Gastrocnemius medialis (tissue), 4 donors: ENCODE measurements at regions of chr9 and their contacts with region 1.

Region 1: DNA sequence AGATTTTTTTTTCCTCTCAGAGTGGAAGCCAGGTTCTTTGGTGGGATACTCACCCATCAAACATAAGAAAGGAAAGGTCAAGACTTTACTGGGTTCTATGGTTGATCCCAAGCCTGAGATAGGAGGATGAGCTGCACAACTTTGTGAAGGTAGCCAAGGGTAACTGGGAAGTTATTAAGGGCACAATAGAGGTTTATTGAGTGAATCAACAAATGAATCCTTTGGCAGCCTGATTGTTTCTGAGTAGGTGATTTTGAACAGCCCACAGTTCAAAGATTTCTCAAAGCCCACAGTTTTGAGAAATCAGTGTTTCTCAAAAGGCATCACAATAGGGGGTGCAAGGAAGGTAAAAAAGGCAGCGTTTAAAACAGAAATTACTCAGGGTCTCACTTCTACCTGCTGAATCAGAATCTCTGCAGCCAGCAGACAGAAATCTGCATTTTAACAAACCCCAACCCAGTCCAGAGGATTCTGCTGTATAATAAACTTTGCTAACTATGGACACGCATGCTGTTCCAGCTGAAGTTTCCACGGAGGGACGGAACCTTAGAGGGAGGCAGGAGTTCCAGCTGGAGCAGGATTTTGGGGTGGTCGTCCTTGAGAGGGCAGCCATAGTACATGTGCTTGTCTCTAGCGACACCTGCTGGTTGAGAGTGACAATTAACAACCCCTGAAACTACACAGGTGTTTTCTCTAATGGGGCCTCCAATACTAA is 32.7 kb upstream of the FSD1L start:
- DNase-seq: peak in 1 of 2 donors; percentile 37
- ATAC-seq: peak; percentile 56 to 69
- H3K4me3 ChIP-seq: no peak overlapping the region
- H3K27ac ChIP-seq: no peak overlapping the region
- H3K4me1 ChIP-seq: peaks cover 0 to 4% of the 10 kb centered on the region in 2 donors
- H3K27me3 ChIP-seq: no peaks in the 10 kb centered on the region
- CTCF ChIP-seq: peak; percentile 79 to 89 (median 86)
- POLR2A ChIP-seq: no peak

Region 2: GRCh38 chr9:104863180-104863883 is 551.8 kb before region 1 on chr9:
- in situ Hi-C with region 1: loop called in 2 of 4 experiments (anchors 10 to 25 kb)
- intact Hi-C with region 1: loop called (anchors 2 kb)
- DNase-seq: peak in 1 of 2 donors; percentile 57
- ATAC-seq: peak; percentile 73 to 79
- H3K4me3 ChIP-seq: no peak overlapping the region
- H3K27ac ChIP-seq: peak overlapping the region; percentile 46 to 90 (median 62)
- H3K4me1 ChIP-seq: peaks cover 24 to 35% of the 10 kb centered on the region in 2 donors
- H3K27me3 ChIP-seq: no peaks in the 10 kb centered on the region
- CTCF ChIP-seq: peak; percentile 56 to 78 (median 74)
- POLR2A ChIP-seq: no peak

Region 3: GRCh38 chr9:104927912-104928740 is 487.0 kb before region 1 on chr9 and contains the start of gene ABCA1:
- in situ Hi-C with region 1: loop called in 1 of 4 experiments (anchors 10 kb)
- intact Hi-C with region 1: loop called (anchors 1 kb)
- DNase-seq: peak; percentile 94 to 96
- ATAC-seq: peak; percentile 85
- H3K4me3 ChIP-seq: peak within 1 kb of the TSS; percentile 68 to 94 (median 88)
- H3K27ac ChIP-seq: peak within 1 kb of the TSS; percentile 89 to 98 (median 96)
- H3K4me1 ChIP-seq: peaks cover 30 to 31% of the 10 kb centered on the region in 2 donors
- H3K27me3 ChIP-seq: no peaks in the 10 kb centered on the region
- CTCF ChIP-seq: no peak
- POLR2A ChIP-seq: peak; percentile 51 to 96
- total RNA-seq, gene ABCA1: 4.9 to 23.8 (median 21.5) TPM

Region 4: DNA sequence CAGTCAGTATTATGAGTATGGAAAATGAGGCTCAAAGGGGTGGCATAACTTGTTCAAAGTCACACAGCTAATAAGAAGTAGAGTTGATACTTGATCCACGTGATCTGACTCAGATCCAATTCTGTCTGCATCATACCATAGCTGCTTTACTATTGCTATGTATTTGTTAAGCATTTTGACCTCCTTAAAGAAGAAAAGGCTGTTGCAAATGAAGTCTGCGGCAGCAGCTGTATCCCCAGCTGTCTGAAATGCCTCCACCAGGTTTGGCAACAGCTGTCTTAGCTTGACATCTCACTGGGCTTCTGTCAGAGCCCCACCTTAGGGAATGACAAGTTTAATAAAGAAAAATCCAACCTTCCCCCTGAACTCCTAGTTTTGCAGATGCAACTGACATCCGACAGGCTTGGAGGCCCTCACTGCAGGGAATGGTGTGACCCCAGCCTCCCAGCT is 246.2 kb before region 1 on chr9:
- in situ Hi-C with region 1: loop called in 3 of 4 experiments (anchors 5 to 10 kb)
- intact Hi-C with region 1: no loop called
- DNase-seq: no peak
- ATAC-seq: no peak
- H3K4me3 ChIP-seq: no peak overlapping the region
- H3K27ac ChIP-seq: no peak overlapping the region
- H3K4me1 ChIP-seq: no peaks in the 10 kb centered on the region
- H3K27me3 ChIP-seq: no peaks in the 10 kb centered on the region
- CTCF ChIP-seq: no peak
- POLR2A ChIP-seq: no peak

Region 5: DNA sequence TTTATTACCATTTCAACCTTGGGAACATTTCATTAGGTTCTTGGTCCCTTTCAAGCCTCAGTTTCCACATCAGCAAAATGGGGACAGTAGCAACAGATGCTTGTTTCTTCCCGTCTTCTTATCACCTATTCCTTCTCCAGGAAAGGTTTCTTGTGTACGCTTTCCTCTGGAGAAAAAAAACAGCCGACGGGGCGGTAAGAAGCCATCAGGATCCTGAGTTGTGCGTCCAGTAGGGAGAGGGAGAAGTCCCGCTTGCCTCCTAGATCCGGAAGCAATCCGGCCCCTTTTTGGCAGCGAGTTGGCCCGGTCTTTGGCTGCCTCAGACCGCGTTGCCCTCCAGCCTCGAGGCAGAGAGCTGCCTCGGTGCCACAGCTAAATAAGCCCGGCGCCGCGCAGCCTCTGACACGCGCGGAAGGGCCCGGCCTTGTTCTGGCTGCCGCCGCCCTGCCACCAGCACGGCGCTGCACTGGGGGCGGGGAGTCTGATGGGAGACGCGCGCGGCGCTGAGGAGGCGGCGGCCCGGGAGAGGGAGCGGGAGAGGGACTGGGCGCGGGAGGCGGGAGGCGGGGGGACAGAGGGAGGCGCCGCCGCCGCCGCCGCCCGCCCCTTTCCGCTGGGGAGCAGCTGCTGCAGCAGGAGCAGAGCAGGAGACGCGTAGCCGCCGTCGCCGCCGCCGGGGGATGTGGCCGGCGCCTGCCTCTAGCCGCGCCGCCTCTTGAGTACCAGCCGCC is 170.9 kb before region 1 on chr9 and contains the start of gene SLC44A1:
- in situ Hi-C with region 1: no loop called
- intact Hi-C with region 1: loop called (anchors 10 kb)
- DNase-seq: peak; percentile 91 to 95
- ATAC-seq: peak; percentile 89 to 90
- H3K4me3 ChIP-seq: peak within 1 kb of the TSS; percentile 76 to 96 (median 84)
- H3K27ac ChIP-seq: peak within 1 kb of the TSS; percentile 71 to 82 (median 74)
- H3K4me1 ChIP-seq: peaks cover 10 to 16% of the 10 kb centered on the region in 2 donors
- H3K27me3 ChIP-seq: no peaks in the 10 kb centered on the region
- CTCF ChIP-seq: peak in 1 of 5 experiments; percentile 9
- POLR2A ChIP-seq: peak; percentile 85 to 88
- total RNA-seq, gene SLC44A1: 5.4 to 15.9 (median 11.3) TPM